Calu3 (cell line): ENCODE measurements at regions of chr17 and their contacts with region 1.

Region 1: GRCh38 chr17:39828443-39828842 is 35.7 kb downstream of the IKZF3 start:
- DNase-seq: peak; percentile 100
- H3K4me3 Mint-ChIP-seq: peak overlapping the region; percentile 36
- H3K27ac Mint-ChIP-seq: peak overlapping the region; percentile 48
- H3K4me1 Mint-ChIP-seq: peaks cover 17% of the 10 kb centered on the region
- H3K27me3 Mint-ChIP-seq: no peaks in the 10 kb centered on the region
- CTCF ChIP-seq: no peak

Region 2: GRCh38 chr17:39235555-39236449 is 592.6 kb before region 1 on chr17:
- CTCF ChIA-PET with region 1: no interaction called
- intact Hi-C with region 1: no loop called
- DNase-seq: peak; percentile 88
- H3K4me3 Mint-ChIP-seq: no peak overlapping the region
- H3K27ac Mint-ChIP-seq: no peak overlapping the region
- H3K4me1 Mint-ChIP-seq: peaks cover 49% of the 10 kb centered on the region
- H3K27me3 Mint-ChIP-seq: peaks cover 28% of the 10 kb centered on the region
- CTCF ChIP-seq: peak; percentile 100

Region 3: GRCh38 chr17:39653662-39654331 is 174.6 kb before region 1 on chr17:
- CTCF ChIA-PET with region 1: interaction called, 94 read pairs
- intact Hi-C with region 1: no loop called
- DNase-seq: peak; percentile 100
- H3K4me3 Mint-ChIP-seq: no peak overlapping the region
- H3K27ac Mint-ChIP-seq: no peak overlapping the region
- H3K4me1 Mint-ChIP-seq: peaks cover 23% of the 10 kb centered on the region
- H3K27me3 Mint-ChIP-seq: no peaks in the 10 kb centered on the region
- CTCF ChIP-seq: no peak

Region 4: GRCh38 chr17:39687811-39688518 is 140.5 kb before region 1 on chr17 and contains the start of gene PGAP3:
- CTCF ChIA-PET with region 1: interaction called, 78 read pairs
- intact Hi-C with region 1: loop called (anchors 1 kb)
- DNase-seq: peak; percentile 100
- H3K4me3 Mint-ChIP-seq: peak within 1 kb of the TSS; percentile 64
- H3K27ac Mint-ChIP-seq: peak within 1 kb of the TSS; percentile 63
- H3K4me1 Mint-ChIP-seq: peaks cover 27% of the 10 kb centered on the region
- H3K27me3 Mint-ChIP-seq: no peaks in the 10 kb centered on the region
- CTCF ChIP-seq: no peak
- total RNA-seq, gene PGAP3: 1,186 and 1,276 TPM in 2 replicates

Region 5: DNA sequence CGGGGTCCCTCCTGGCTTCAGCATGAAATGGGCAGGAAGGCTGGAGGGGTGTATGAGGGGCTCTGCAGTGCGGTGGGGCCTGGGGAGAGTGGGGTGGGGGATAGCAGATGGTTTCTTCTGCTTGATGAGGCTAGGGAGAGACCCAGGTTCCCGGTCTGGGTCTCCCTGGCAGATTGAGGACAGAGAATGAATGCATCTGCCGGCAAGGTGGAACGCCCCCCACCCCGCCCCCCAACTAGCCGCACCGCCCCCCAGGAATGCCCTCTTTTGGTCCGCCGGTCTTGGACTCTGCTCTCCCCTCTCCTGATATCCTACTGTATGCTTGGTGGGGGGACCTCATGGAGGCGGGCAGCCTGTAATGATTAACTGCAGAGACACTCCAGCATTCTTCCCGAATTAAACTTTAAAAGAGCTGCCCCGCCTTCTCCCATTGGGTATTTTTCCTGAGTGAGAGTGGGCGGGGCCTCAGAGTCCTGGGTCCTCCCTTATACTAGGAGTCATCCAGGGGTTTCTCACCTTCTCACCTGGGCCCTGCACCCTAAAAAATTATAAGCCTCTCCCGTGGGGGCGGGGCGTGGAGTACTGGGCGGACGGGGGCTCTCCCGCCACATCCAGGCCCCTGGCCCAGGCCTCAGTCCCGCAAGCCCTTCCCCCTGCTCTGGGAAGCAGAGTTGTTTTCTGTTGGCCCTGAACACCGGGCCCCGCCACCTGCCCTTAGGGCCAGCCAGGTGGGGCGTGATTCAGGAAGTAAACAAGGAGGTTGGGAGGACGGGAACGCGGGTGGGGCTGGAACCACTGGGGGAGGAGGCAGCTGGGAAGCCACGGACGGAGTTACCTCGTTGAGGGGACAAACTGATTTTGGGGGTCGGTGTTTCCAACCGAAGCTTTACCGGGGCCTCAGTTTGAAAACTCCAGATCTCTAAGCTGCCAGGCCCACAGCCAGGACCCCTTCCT is 89.2 kb before region 1 on chr17:
- CTCF ChIA-PET with region 1: interaction called, 1,211 read pairs
- intact Hi-C with region 1: loop called (anchors 1 kb)
- DNase-seq: peak; percentile 100
- H3K4me3 Mint-ChIP-seq: peak overlapping the region; percentile 77
- H3K27ac Mint-ChIP-seq: peak overlapping the region; percentile 21
- H3K4me1 Mint-ChIP-seq: peaks cover 54% of the 10 kb centered on the region
- H3K27me3 Mint-ChIP-seq: no peaks in the 10 kb centered on the region
- CTCF ChIP-seq: no peak

Region 6: DNA sequence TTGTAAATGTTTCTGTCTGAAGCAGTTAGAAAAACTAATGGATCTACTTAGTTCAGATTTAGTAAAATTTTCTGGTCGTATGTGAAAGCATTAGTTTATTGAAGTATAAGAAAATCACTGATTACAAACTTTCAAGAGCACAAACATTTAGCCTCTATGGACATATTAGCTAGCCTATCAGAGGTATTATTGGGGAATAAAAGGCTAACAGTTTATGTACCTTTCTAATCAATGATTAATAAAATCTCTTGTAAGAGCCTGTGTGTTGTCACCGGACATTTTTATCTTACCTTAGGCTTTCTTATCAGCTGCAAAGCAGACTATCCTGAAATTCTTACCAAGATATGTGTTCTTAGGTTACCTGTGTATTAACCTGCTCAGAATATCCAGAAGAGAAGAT is 60.8 kb after region 1 on chr17:
- CTCF ChIA-PET with region 1: interaction called, 1,004 read pairs
- intact Hi-C with region 1: loop called (anchors 1 kb)
- DNase-seq: peak; percentile 82
- H3K4me3 Mint-ChIP-seq: no peak overlapping the region
- H3K27ac Mint-ChIP-seq: no peak overlapping the region
- H3K4me1 Mint-ChIP-seq: peaks cover 26% of the 10 kb centered on the region
- H3K27me3 Mint-ChIP-seq: peaks cover 22% of the 10 kb centered on the region
- CTCF ChIP-seq: no peak

Region 7: GRCh38 chr17:39963829-39964228 is 135.4 kb after region 1 on chr17:
- CTCF ChIA-PET with region 1: interaction called, 1,809 read pairs
- intact Hi-C with region 1: loop called (anchors 1 kb)
- DNase-seq: peak; percentile 94
- H3K4me3 Mint-ChIP-seq: no peak overlapping the region
- H3K27ac Mint-ChIP-seq: peak overlapping the region; percentile 0
- H3K4me1 Mint-ChIP-seq: peaks cover 45% of the 10 kb centered on the region
- H3K27me3 Mint-ChIP-seq: peaks cover 32% of the 10 kb centered on the region
- CTCF ChIP-seq: no peak